ENCODE measurements at regions of chr7 and their contacts with region 1.

Region 1: DNA sequence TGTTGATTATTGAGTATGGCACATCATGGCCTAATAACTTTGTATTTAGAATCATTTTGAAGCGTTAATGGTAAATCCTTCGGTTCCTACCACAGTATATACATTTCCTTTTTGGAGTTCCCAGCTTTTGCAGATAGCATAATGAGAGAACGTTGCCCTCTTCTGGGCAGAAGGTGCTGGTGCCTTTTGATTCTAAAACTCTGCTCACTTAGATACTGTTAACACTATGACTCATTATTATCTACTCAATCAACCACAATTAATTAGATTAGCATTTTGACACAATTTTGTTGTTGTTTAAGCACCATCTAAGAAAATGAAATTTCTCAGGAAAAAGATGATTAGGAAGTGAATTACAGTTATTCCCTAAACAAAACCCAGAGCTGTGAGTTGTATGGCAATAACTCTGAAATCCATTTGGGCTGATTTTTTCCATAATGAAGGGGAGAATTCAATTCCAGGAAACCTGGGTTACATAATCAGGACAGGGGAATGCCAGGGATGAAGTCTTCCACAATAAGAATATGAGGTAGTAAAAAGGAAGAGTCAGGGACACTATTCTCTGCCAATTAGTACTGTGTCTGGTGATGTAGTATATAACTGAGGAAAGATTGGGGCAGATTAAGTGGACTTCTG is 11.5 kb upstream of the DLD start:
- DNase-seq: no peak
- H3K4me3 ChIP-seq: no peak overlapping the region
- H3K27ac ChIP-seq: no peak overlapping the region
- H3K4me1 ChIP-seq: no peaks in the 10 kb centered on the region
- H3K27me3 ChIP-seq: no peaks in the 10 kb centered on the region
- CTCF ChIP-seq: peak; percentile 43 to 81 (median 76)
- POLR2A ChIP-seq: no peak

Region 2: DNA sequence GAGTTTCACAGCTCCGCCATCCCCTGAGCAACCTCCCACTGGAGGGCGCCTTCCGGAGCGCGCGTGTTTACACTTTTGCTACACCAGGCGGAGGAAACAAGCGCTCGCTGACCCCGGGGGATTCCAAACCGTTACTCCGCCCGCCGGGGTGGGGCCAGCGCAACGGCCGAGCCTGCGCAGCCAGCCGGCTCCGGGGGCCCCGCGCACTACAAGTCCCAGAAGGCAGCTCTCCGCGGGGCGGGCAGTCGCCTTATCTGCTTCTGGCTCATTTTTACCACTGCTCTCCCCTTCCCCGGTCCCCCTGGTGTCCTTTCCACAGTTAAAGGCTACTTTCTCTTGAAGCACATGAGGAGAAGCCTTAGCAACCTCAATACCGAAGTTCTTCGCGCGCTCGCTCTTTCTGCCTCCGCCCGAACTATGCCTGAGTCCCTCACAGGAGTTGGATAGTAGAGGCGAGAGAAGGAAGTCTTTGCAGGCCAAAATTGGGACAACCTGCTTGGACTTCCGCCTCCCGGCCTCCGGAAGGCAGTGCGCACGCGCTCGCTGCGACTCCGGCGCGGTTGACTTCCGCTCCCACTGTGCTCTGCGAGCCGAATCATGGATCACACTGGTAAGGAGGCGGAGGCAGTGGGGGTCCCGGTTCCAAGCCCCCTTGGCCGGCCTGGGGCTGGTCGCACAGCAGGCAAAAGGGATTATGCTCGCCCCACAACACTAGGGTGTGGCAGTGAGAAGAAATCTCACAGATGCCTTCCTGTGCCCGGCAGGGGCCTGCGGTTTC is 135.8 kb before region 1 on chr7 and contains the start of gene CBLL1:
- intact Hi-C with region 1: loop called (anchors 10 kb)
- DNase-seq: peak; percentile 94 to 96
- H3K4me3 ChIP-seq: peak within 1 kb of the TSS; percentile 81 to 95 (median 94)
- H3K27ac ChIP-seq: peak within 1 kb of the TSS; percentile 95 to 98
- H3K4me1 ChIP-seq: peaks cover 0 to 4% of the 10 kb centered on the region in 2 donors
- H3K27me3 ChIP-seq: no peaks in the 10 kb centered on the region
- CTCF ChIP-seq: peak; percentile 52 to 74 (median 74)
- POLR2A ChIP-seq: peak; percentile 49
- total RNA-seq, gene CBLL1: 27.5 to 49.3 (median 30.4) TPM

Region 3: DNA sequence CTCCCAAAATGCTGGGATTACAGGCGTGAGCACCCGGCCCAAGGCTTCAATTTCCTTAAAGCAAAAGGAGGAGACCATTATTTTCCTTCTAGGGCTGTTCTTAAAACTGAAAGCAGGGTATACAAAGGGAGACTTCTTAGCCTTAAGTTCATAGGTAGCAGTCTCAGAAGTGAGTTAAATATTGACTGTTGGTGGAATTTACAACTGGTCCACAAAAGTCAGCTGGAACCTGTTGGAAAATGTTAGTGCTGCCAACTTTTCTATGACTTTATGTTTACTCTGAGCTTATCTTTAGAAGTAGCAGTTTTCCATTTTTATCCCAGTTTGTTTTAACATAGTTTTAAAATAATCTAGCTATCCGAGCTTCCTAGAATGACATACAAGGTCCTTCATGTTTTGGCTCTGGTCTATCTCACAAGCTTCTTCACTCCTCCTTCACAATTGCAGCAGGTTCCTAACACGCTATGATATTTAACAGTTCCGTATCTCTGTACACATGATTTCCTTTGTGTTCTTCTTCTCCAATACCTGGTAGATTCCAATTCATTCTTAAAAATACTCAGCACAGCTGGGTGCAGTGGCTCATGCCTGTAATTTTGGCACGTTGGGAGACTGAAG is 79.8 kb before region 1 on chr7:
- intact Hi-C with region 1: loop called (anchors 2 kb)
- DNase-seq: no peak
- H3K4me3 ChIP-seq: no peak overlapping the region
- H3K27ac ChIP-seq: no peak overlapping the region
- H3K4me1 ChIP-seq: no peaks in the 10 kb centered on the region
- H3K27me3 ChIP-seq: no peaks in the 10 kb centered on the region
- CTCF ChIP-seq: no peak
- POLR2A ChIP-seq: no peak